ENCODE measurements at regions of chr9 and their contacts with region 1.

Region 1: DNA sequence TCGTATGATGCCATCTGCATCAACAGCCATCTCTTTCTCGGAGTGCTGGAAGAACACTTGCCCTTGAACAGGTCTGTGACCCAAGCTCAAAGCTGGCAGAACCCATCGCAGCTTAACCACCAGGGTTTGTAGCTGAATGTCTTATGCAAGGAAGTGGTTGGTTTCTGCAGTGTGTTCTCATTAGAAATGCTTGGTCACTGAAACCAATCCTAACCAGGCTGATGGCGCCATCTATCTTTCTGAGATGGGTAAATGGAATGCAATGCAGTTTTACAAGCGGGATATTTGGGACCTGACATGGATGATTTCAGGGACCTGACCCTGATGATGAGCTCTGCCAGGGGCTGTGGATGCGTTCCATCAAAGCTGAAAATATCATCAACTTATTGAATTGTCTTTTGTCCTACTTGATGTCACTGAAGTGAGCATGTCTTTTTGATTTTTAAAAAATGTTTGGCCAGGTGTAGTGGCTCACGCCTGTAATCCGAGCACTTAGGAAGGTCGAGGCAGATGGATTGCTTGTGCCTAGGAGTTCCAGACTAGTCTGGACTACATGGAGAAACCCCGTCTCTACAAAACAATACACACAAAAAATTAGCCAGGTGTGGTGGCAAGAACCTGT is 28.7 kb downstream of the DMRT3 start:
- DNase-seq: peak in 1 of 35 experiments; percentile 36
- ATAC-seq: peak in 1 of 4 experiments; percentile 27
- H3K4me3 ChIP-seq: no peak overlapping the region
- H3K4me3 Mint-ChIP-seq: no peak overlapping the region
- H3K27ac ChIP-seq: no peak overlapping the region
- H3K27ac Mint-ChIP-seq: no peak overlapping the region
- H3K4me1 ChIP-seq: peaks cover 0 to 4% of the 10 kb centered on the region in 2 experiments
- H3K4me1 Mint-ChIP-seq: peaks cover 0 to 8% (median 7%) of the 10 kb centered on the region in 3 donors
- H3K27me3 ChIP-seq: peaks cover 2 to 20% of the 10 kb centered on the region in 2 experiments
- H3K27me3 Mint-ChIP-seq: peaks cover 20 to 34% of the 10 kb centered on the region in 2 donors

Region 2: DNA sequence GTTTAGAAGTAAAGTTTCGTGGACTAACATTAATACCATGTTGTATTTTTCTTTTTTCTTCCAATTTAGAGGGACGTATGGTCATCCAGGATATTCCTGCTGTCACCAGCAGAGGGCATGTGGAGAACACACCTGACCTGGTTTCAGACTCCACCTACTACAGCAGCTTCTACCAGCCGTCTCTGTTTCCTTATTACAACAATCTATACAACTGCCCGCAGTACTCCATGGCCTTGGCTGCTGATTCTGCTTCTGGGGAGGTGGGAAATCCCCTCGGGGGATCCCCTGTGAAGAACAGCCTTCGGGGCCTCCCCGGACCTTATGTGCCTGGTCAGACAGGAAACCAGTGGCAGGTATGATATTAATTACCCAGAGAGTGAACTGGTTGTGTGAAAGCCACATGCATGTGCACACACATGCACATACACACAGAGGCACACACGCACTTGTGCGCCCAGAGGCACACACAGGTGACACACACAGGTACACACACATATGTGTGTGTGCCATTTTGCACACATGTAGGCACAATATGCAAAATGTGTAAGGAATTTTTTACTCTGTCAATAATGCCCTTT is 111.2 kb before region 1 on chr9:
- CTCF ChIA-PET with region 1: interaction called, 5 to 10 read pairs
- POLR2A ChIA-PET with region 1: no interaction called
- DNase-seq: peak in 34 of 35 experiments; percentile 5 to 68 (median 22)
- ATAC-seq: peak; percentile 73 to 94 (median 81)
- H3K4me3 ChIP-seq: peak overlapping the region; percentile 2 to 23
- H3K4me3 Mint-ChIP-seq: peak overlapping the region in 2 of 3 donors; percentile 23 to 42
- H3K27ac ChIP-seq: no peak overlapping the region
- H3K27ac Mint-ChIP-seq: peak overlapping the region in 1 of 2 donors; percentile 25
- H3K4me1 ChIP-seq: peaks cover 0 to 11% of the 10 kb centered on the region in 2 experiments
- H3K4me1 Mint-ChIP-seq: peaks cover 6 to 9% (median 9%) of the 10 kb centered on the region in 3 donors
- H3K27me3 ChIP-seq: peaks cover 3% of the 10 kb centered on the region in 2 experiments
- H3K27me3 Mint-ChIP-seq: peaks cover 9 to 12% of the 10 kb centered on the region in 2 donors

Region 3: DNA sequence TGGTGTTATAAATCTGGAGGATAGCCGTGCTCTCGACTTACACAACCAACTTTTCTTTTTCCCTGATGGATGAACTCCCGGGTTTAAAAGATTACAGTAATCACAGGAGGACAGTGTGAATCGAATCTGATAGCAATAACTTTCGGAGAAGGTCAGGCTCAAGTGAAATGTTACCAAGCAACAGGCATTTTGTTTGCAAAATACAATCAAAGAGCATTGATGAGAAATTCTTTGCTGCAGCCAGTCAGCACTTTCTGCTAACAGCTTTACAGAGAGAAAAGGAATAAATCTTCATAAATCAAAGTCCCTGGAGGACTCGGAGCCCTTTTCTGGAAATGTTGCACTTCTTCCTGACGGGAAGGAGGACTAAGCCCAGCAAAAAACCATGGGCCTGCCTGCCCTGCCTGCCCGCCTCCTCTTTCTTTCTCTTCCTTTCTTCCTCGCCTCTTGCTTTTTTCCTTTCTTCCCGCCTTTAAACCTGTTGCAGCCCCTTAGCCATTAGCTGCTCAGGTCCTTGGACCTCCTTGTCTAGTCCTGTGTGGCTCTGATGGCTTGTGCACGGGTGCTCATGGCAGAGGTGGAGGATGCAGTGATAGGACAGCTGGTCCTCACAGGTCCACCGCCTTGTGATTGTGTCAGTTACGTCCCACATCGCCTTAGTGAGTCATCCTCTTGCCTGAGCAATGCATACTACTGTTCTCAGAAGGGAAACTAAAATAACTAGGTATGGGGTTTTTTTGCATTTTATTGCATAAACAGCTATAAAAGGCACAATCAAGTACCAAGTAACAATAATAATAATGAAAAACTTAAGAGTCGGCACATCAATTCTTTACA is 22.5 kb before region 1 on chr9:
- CTCF ChIA-PET with region 1: no interaction called
- POLR2A ChIA-PET with region 1: no interaction called
- DNase-seq: no peak
- ATAC-seq: no peak
- H3K4me3 ChIP-seq: no peak overlapping the region
- H3K4me3 Mint-ChIP-seq: no peak overlapping the region
- H3K27ac ChIP-seq: no peak overlapping the region
- H3K27ac Mint-ChIP-seq: no peak overlapping the region
- H3K4me1 ChIP-seq: no peaks in the 10 kb centered on the region
- H3K4me1 Mint-ChIP-seq: peaks cover 2 to 5% (median 3%) of the 10 kb centered on the region in 3 donors
- H3K27me3 ChIP-seq: peaks cover 26 to 46% of the 10 kb centered on the region in 2 experiments
- H3K27me3 Mint-ChIP-seq: peaks cover 74 to 85% of the 10 kb centered on the region in 2 donors